ENCODE measurements at regions of chr4 and their contacts with region 1.

Region 1: GRCh38 chr4:74793757-74794340 is 474 bp downstream of the BTC start:
- DNase-seq: peak; percentile 66 to 81
- H3K4me3 ChIP-seq: peak overlapping the region; percentile 39 to 74 (median 67)
- H3K27ac ChIP-seq: no peak overlapping the region
- H3K4me1 ChIP-seq: peaks cover 2 to 9% (median 6%) of the 10 kb centered on the region in 4 experiments
- H3K27me3 ChIP-seq: peaks cover 1 to 20% (median 11%) of the 10 kb centered on the region in 4 experiments; a peak in 6 of 7 replicates
- CTCF ChIP-seq: peak; percentile 71 to 83 (median 79)
- EP300 ChIP-seq: no peak
- POLR2A ChIP-seq: no peak
- RAD21 ChIP-seq: peak; percentile 13 to 49; a peak in 3 of 4 replicates

Region 2: GRCh38 chr4:74764119-74764518 is 29.7 kb before region 1 on chr4:
- CTCF ChIA-PET with region 1: no interaction called
- POLR2A ChIA-PET with region 1: no interaction called
- DNase-seq: no peak
- H3K4me3 ChIP-seq: no peak overlapping the region
- H3K27ac ChIP-seq: no peak overlapping the region
- H3K4me1 ChIP-seq: no peaks in the 10 kb centered on the region
- H3K27me3 ChIP-seq: no peaks in the 10 kb centered on the region
- CTCF ChIP-seq: no peak
- EP300 ChIP-seq: no peak
- POLR2A ChIP-seq: no peak
- RAD21 ChIP-seq: no peak

Region 3: GRCh38 chr4:74823194-74823593 is 29.3 kb after region 1 on chr4:
- CTCF ChIA-PET with region 1: interaction called, 11 read pairs
- POLR2A ChIA-PET with region 1: no interaction called
- DNase-seq: no peak
- H3K4me3 ChIP-seq: no peak overlapping the region
- H3K27ac ChIP-seq: no peak overlapping the region
- H3K4me1 ChIP-seq: no peaks in the 10 kb centered on the region
- H3K27me3 ChIP-seq: no peaks in the 10 kb centered on the region
- CTCF ChIP-seq: no peak
- EP300 ChIP-seq: no peak
- POLR2A ChIP-seq: no peak
- RAD21 ChIP-seq: no peak